Calu3 (cell line): ENCODE measurements at regions of chr4 and their contacts with region 1.

Region 1: DNA sequence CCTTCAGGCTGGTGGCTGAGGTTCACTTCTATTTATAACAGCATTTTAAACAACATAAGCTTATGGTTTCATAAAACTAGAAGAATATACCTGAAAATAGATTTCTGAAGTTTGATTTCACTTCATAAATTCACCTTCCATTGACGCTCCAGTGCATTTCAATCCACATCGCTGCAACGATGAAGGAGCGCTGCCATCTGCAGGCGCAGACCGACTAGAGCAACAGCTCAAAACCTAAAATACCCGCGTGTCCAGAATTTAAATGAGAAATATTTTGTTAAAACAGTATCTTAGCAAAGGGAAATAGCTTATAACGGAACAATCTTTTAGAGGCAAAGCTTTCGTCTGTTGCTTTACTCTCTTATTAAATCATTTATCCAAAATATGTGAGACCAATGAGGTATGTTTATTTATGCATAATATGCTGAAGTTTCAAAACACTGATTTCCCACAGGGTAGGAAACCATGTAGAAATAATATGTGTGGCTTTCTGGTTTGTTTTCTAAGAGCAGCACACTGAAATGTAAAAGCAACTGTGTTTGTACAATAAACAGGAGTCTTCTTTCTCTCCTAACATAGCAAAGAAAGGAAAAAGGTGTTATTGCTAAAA is 816.4 kb upstream of the FRG1 start:
- DNase-seq: peak; percentile 34
- H3K4me3 Mint-ChIP-seq: no peak overlapping the region
- H3K27ac Mint-ChIP-seq: no peak overlapping the region
- H3K4me1 Mint-ChIP-seq: no peaks in the 10 kb centered on the region
- H3K27me3 Mint-ChIP-seq: no peaks in the 10 kb centered on the region
- CTCF ChIP-seq: peak; percentile 45

Region 2: DNA sequence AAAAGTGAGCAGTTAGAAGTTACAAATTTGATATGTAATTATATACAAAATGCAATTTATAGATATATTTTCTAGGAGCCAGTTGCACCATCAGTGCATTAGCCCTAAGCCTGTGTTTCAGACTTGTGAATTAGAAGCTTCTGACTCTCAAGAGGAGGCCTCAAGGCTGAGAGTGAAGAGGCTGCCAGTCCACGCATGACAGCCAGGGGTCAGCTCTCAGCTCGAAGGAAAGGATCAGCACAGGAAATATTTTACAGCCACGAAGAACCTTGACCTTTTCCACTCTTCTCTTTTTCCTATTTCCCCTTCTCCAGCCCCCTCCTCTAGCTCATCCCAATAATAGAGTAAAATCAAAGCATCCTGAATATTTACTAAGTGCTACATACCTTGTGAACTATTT is 342.6 kb before region 1 on chr4:
- CTCF ChIA-PET with region 1: no interaction called
- intact Hi-C with region 1: loop called (anchors 10 kb)
- DNase-seq: peak; percentile 19
- H3K4me3 Mint-ChIP-seq: no peak overlapping the region
- H3K27ac Mint-ChIP-seq: no peak overlapping the region
- H3K4me1 Mint-ChIP-seq: no peaks in the 10 kb centered on the region
- H3K27me3 Mint-ChIP-seq: no peaks in the 10 kb centered on the region
- CTCF ChIP-seq: peak; percentile 32

Region 3: DNA sequence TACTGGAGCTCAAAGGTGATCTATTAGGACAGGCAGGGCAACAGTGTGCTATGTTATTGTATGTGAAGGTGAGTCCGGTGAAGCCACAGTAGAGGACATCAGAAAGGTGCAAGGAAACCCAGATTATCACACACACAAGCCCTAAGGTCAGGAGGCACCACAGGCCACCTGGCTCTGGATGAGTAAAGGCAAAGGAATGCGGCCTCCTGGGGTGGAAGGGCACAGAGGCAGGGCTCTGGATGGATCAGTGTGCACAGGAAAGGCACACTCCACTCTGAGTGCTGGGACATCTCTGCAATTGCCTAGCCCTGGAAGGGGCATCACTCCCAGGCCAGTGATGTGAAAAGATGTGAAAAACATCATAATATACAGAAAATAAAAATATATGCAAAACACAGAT is 301.6 kb before region 1 on chr4:
- CTCF ChIA-PET with region 1: no interaction called
- intact Hi-C with region 1: loop called (anchors 10 kb)
- DNase-seq: peak; percentile 26
- H3K4me3 Mint-ChIP-seq: no peak overlapping the region
- H3K27ac Mint-ChIP-seq: no peak overlapping the region
- H3K4me1 Mint-ChIP-seq: no peaks in the 10 kb centered on the region
- H3K27me3 Mint-ChIP-seq: no peaks in the 10 kb centered on the region
- CTCF ChIP-seq: no peak

Region 4: GRCh38 chr4:188971125-188971524 is 153.1 kb before region 1 on chr4:
- CTCF ChIA-PET with region 1: no interaction called
- intact Hi-C with region 1: loop called (anchors 10 kb)
- DNase-seq: peak; percentile 1
- H3K4me3 Mint-ChIP-seq: no peak overlapping the region
- H3K27ac Mint-ChIP-seq: no peak overlapping the region
- H3K4me1 Mint-ChIP-seq: no peaks in the 10 kb centered on the region
- H3K27me3 Mint-ChIP-seq: no peaks in the 10 kb centered on the region
- CTCF ChIP-seq: no peak